Natural killer cell (primary cell): ENCODE measurements at regions of chr6 and their contacts with region 1.

Region 1: DNA sequence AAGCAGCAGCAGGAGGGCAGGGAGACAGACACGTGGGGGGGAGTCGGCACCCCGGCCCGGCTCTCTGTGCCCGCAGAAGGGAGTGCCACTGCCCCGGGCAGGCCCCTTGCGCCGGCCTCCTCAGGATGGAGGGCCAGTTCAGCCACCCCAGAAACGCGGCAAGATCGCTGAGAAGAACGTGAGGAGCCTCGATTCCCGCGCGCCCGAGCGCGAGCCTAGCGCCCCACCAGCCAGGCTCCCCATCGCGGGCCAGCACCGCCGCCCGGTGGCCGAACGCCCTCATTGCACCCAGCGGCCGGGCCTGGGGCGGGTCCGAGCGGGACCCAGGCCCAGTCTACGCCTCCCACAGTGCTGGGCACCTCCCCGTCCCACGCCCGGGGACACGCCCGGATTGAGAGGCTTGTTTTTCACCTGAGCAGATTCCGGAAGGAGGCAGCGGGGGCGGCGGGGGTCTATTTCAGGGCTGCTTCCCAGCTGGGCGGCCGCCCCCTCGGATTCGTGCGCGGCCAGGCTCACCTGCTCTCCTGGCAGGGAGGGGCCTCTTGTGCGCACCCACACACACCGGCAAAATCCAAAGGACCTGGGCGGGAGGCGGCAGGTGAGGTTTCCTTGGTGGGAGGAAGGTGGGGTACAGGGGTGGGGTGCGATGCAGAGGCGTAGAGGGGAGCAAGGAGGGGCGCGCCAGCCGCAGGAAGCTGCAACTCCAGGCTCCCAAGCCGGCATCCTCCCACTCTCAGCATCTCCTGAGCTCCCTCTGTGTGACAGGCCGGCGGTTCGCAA is 9.0 kb upstream of the GRM4 start:
- DNase-seq: peak; percentile 55 to 77
- ATAC-seq: peak; percentile 64 to 95 (median 89)
- H3K4me3 ChIP-seq: no peak overlapping the region
- H3K4me3 Mint-ChIP-seq: no peak overlapping the region
- H3K27ac ChIP-seq: no peak overlapping the region
- H3K27ac Mint-ChIP-seq: no peak overlapping the region
- H3K4me1 ChIP-seq: peaks cover 11% of the 10 kb centered on the region
- H3K4me1 Mint-ChIP-seq: peaks cover 0 to 3% of the 10 kb centered on the region in 2 donors
- H3K27me3 ChIP-seq: peaks cover 25% of the 10 kb centered on the region
- H3K27me3 Mint-ChIP-seq: peaks cover 60 to 69% of the 10 kb centered on the region in 2 donors
- CTCF ChIP-seq: peak; percentile 84

Region 2: GRCh38 chr6:33744001-33744848 is 410.6 kb before region 1 on chr6:
- intact Hi-C with region 1: loop called (anchors 1 kb)
- DNase-seq: peak; percentile 66 to 86
- ATAC-seq: peak; percentile 71 to 91 (median 86)
- H3K4me3 ChIP-seq: no peak overlapping the region
- H3K4me3 Mint-ChIP-seq: no peak overlapping the region
- H3K27ac ChIP-seq: no peak overlapping the region
- H3K27ac Mint-ChIP-seq: no peak overlapping the region
- H3K4me1 ChIP-seq: no peaks in the 10 kb centered on the region
- H3K4me1 Mint-ChIP-seq: peaks cover 5% of the 10 kb centered on the region in 2 donors
- H3K27me3 ChIP-seq: no peaks in the 10 kb centered on the region
- H3K27me3 Mint-ChIP-seq: peaks cover 7 to 12% of the 10 kb centered on the region in 2 donors
- CTCF ChIP-seq: peak; percentile 75

Region 3: GRCh38 chr6:33771146-33772081 is 383.4 kb before region 1 on chr6:
- intact Hi-C with region 1: loop called (anchors 2 kb)
- DNase-seq: peak; percentile 64 to 81
- ATAC-seq: peak; percentile 78 to 87 (median 82)
- H3K4me3 ChIP-seq: no peak overlapping the region
- H3K4me3 Mint-ChIP-seq: no peak overlapping the region
- H3K27ac ChIP-seq: no peak overlapping the region
- H3K27ac Mint-ChIP-seq: no peak overlapping the region
- H3K4me1 ChIP-seq: peaks cover 8% of the 10 kb centered on the region
- H3K4me1 Mint-ChIP-seq: peaks cover 5 to 6% of the 10 kb centered on the region in 2 donors
- H3K27me3 ChIP-seq: no peaks in the 10 kb centered on the region
- H3K27me3 Mint-ChIP-seq: peaks cover 6 to 10% of the 10 kb centered on the region in 2 donors
- CTCF ChIP-seq: peak; percentile 88

Region 4: DNA sequence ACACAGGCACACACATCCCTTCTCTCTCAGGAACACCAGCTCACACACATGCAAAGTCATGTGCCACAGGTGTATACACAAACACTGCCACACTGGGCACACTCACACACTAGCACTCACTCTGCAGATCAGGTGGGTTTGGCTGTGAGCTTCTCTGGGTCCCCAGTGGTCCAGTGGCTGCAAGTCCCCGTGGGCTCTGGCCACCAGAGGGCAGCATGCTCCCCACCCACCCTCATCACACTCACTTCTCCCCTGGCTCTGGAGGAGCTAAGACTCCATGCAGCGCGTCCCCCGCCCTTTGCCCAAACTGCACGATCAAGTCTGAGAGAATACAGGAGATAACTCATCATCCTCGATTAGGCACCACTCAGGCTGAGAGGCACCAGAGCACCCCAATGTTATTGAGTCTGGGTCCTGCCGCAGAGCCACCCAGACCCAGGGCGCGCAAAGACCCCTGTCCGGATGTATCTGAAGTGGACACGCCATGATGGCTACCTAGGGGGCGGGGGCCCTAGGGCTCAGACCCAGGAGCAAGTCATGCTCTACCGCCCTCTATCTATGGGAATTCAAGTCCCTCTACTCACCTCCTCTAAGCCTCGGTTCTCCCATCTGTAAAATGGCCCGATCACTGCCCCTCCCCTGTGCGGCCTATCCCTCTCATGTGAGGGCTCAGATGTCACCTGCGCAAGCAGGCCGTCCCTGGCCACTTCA is 99.5 kb before region 1 on chr6:
- intact Hi-C with region 1: loop called (anchors 1 kb)
- DNase-seq: peak; percentile 53 to 79
- ATAC-seq: peak in 2 of 3 donors; percentile 78 to 88
- H3K4me3 ChIP-seq: no peak overlapping the region
- H3K4me3 Mint-ChIP-seq: no peak overlapping the region
- H3K27ac ChIP-seq: no peak overlapping the region
- H3K27ac Mint-ChIP-seq: no peak overlapping the region
- H3K4me1 ChIP-seq: no peaks in the 10 kb centered on the region
- H3K4me1 Mint-ChIP-seq: peaks cover 7 to 10% of the 10 kb centered on the region in 2 donors
- H3K27me3 ChIP-seq: no peaks in the 10 kb centered on the region
- H3K27me3 Mint-ChIP-seq: peaks cover 24 to 33% of the 10 kb centered on the region in 2 donors
- CTCF ChIP-seq: peak; percentile 71

Region 5: GRCh38 chr6:34143884-34144580 is 10.8 kb before region 1 on chr6:
- intact Hi-C with region 1: no loop called
- DNase-seq: peak in 1 of 2 donors; percentile 64
- ATAC-seq: peak; percentile 27 to 72 (median 34)
- H3K4me3 ChIP-seq: no peak overlapping the region
- H3K4me3 Mint-ChIP-seq: peak overlapping the region; percentile 13
- H3K27ac ChIP-seq: no peak overlapping the region
- H3K27ac Mint-ChIP-seq: no peak overlapping the region
- H3K4me1 ChIP-seq: peaks cover 29% of the 10 kb centered on the region
- H3K4me1 Mint-ChIP-seq: peaks cover 0 to 13% of the 10 kb centered on the region in 2 donors
- H3K27me3 ChIP-seq: peaks cover 40% of the 10 kb centered on the region
- H3K27me3 Mint-ChIP-seq: peaks cover 46 to 50% of the 10 kb centered on the region in 2 donors
- CTCF ChIP-seq: no peak

Region 6: DNA sequence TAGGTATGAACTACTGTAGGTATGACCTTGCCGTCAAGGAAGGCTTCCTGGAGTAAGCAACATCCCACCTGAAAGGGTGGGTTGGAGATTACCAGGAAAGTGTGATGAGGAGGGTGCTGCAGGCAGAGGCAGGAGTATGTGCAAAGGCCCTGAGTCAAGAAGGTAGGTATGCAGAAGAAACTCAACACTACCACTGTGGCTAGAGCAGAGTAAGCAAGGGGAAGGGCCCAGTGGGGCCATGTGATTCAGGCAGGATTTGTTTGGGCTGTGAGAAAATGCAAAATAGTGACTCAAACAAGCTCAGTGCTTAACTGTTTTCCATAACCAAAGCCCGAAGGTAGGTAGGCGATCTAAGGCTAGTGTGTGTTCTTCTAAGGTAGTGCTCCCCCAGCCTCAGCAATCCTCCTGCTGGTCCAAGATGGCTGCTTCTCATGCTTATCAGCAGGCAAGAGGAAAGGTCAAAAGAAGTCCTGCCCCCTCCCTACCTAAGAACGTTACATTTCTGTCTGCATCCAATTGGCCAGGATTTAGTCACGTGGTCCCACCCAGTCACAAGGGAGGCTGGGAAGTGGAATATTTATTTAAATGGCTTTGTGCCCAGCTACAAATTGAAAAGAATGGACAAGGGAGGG is 45.6 kb after region 1 on chr6:
- intact Hi-C with region 1: no loop called
- DNase-seq: no peak
- ATAC-seq: no peak
- H3K4me3 ChIP-seq: no peak overlapping the region
- H3K4me3 Mint-ChIP-seq: no peak overlapping the region
- H3K27ac ChIP-seq: no peak overlapping the region
- H3K27ac Mint-ChIP-seq: no peak overlapping the region
- H3K4me1 ChIP-seq: peaks cover 12% of the 10 kb centered on the region
- H3K4me1 Mint-ChIP-seq: peaks cover 5 to 11% of the 10 kb centered on the region in 2 donors
- H3K27me3 ChIP-seq: no peaks in the 10 kb centered on the region
- H3K27me3 Mint-ChIP-seq: peaks cover 0 to 3% of the 10 kb centered on the region in 2 donors
- CTCF ChIP-seq: no peak